CD8-positive, alpha-beta T cell (primary cell): ENCODE measurements at regions of chr17 and their contacts with region 1.

Region 1: DNA sequence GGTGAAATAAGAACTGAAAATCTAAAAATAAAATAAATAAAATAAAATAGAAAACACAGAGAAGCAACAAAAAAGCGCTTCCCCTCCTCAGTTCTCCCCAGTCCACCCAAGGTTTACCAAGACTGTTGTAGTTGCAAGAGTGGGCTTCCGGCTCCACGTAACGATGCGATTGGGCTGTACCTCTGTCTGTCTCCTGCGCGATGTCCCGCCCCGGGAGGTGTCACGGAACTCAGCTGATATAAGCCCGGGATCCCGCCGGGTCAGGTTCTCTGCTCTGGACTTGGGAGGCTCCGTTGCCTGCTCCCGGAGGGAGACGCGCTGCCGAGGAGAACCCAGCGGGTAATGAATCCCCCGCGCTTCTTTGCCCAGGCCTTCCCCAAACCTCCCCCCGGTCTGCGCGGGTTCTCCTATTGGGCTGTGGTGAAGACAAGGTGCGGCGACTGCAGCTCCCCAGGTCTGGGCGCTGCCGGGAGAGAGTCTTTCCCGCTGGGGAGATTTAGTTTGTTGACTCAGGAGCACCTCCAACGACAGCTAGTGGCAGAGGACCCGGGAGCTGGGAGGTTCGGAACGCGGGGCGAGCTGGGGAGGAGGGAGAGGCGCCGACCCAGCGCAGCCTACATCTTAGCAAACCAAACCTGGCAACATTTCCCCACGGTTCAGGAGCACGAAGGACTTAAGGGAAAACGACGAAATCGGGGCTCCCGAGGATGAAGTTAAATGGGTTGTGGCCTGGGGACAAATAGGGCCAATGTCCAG is at the start of gene SLFN5:
- DNase-seq: peak; percentile 87 to 98 (median 94)
- ATAC-seq: peak; percentile 71
- H3K4me3 ChIP-seq: peak within 1 kb of the TSS; percentile 92
- H3K4me3 Mint-ChIP-seq: peak within 1 kb of the TSS; percentile 94
- H3K27ac ChIP-seq: peak within 1 kb of the TSS; percentile 94 to 96
- H3K27ac Mint-ChIP-seq: peak within 1 kb of the TSS; percentile 100
- H3K4me1 ChIP-seq: peaks cover 46% of the 10 kb centered on the region
- H3K4me1 Mint-ChIP-seq: peaks cover 63% of the 10 kb centered on the region
- H3K27me3 ChIP-seq: no peaks in the 10 kb centered on the region
- H3K27me3 Mint-ChIP-seq: no peaks in the 10 kb centered on the region
- CTCF ChIP-seq: no peak
- total RNA-seq, gene SLFN5: 46.7 to 47.0 TPM

Region 2: DNA sequence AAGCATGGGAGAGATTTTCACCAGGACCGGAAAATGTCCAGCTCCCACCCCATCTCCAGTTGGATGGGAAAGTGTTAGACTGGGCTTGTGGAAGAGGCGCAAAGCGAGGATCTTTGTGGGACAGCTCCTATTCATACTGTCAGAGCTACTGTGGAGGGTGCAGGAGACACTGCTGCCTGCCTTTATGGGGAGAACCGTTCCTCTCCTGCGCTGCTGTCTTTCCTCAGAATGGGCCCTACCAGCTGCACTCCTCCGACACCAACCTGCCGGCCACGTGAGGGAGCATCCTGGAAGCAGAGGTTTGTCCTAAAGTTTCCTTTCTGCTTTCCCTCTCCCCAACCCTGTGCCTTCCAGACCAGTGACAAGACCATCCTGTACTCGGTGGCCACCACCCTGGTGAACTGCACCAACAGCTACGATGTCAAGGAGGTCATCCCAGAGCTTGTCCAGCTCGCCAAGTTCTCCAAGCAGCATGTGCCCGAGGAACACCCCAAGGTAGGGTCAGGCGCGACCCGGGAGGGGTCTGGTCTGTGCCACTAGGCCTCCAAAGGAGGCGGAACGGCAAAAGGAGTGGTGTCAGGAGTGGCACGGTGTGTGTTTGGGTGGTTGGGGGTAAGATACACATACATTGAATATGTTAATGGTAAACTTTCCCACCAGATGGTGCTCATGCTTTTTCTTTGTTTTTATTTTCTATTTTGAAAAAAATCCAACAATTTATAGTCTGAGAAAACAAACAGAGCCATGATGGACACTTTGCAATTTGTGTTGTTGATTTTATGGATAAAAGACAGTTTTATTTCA is 71.8 kb before region 1 on chr17:
- CTCF ChIA-PET with region 1: interaction called, 45 read pairs
- POLR2A ChIA-PET with region 1: interaction called, 10 read pairs
- intact Hi-C with region 1: loop called (anchors 1 kb)
- DNase-seq: peak in 5 of 9 experiments; percentile 31 to 70 (median 62)
- ATAC-seq: peak; percentile 79
- H3K4me3 ChIP-seq: peak overlapping the region; percentile 10 to 31
- H3K4me3 Mint-ChIP-seq: peak overlapping the region; percentile 57
- H3K27ac ChIP-seq: peak overlapping the region in 1 of 2 experiments; percentile 51
- H3K27ac Mint-ChIP-seq: peak overlapping the region; percentile 90
- H3K4me1 ChIP-seq: peaks cover 37% of the 10 kb centered on the region
- H3K4me1 Mint-ChIP-seq: peaks cover 46% of the 10 kb centered on the region
- H3K27me3 ChIP-seq: no peaks in the 10 kb centered on the region
- H3K27me3 Mint-ChIP-seq: no peaks in the 10 kb centered on the region
- CTCF ChIP-seq: peak; percentile 69

Region 3: GRCh38 chr17:35214631-35215273 is 28.2 kb before region 1 on chr17:
- CTCF ChIA-PET with region 1: interaction called, 31 read pairs
- POLR2A ChIA-PET with region 1: interaction called, 145 read pairs
- intact Hi-C with region 1: loop called (anchors 1 kb)
- DNase-seq: peak in 8 of 9 experiments; percentile 16 to 74 (median 48)
- ATAC-seq: peak; percentile 50
- H3K4me3 ChIP-seq: peak overlapping the region; percentile 33 to 42
- H3K4me3 Mint-ChIP-seq: peak overlapping the region; percentile 67
- H3K27ac ChIP-seq: peak overlapping the region; percentile 77 to 84
- H3K27ac Mint-ChIP-seq: peak overlapping the region; percentile 98
- H3K4me1 ChIP-seq: peaks cover 90% of the 10 kb centered on the region
- H3K4me1 Mint-ChIP-seq: peaks cover 89% of the 10 kb centered on the region
- H3K27me3 ChIP-seq: no peaks in the 10 kb centered on the region
- H3K27me3 Mint-ChIP-seq: no peaks in the 10 kb centered on the region
- CTCF ChIP-seq: no peak

Region 4: DNA sequence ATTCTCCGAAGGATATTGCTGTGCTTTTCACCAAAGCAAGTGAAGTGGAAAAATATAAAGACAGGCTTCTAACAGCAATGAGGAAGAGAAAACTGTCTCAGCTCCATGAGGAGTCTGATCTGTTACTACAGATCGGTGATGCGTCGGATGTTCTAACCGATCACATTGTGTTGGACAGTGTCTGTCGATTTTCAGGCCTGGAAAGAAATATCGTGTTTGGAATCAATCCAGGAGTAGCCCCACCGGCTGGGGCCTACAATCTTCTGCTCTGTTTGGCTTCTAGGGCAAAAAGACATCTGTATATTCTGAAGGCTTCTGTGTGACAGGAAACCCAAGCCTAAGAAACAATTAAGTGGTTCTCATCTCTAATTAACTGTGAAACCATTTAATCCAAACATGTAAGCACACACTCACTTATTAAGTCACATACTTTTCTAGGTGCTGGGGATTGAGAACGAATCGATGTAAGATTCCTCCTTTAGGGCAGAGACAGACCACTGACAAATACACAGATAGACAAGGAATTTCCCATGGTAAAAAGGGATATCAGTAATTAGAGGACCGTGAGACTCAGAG is 22.7 kb after region 1 on chr17:
- CTCF ChIA-PET with region 1: interaction called, 7 read pairs
- POLR2A ChIA-PET with region 1: interaction called, 12 read pairs
- intact Hi-C with region 1: no loop called
- DNase-seq: no peak
- ATAC-seq: no peak
- H3K4me3 ChIP-seq: no peak overlapping the region
- H3K4me3 Mint-ChIP-seq: peak overlapping the region; percentile 13
- H3K27ac ChIP-seq: peak overlapping the region in 1 of 2 experiments; percentile 22
- H3K27ac Mint-ChIP-seq: peak overlapping the region; percentile 91
- H3K4me1 ChIP-seq: peaks cover 74% of the 10 kb centered on the region
- H3K4me1 Mint-ChIP-seq: peaks cover 74% of the 10 kb centered on the region
- H3K27me3 ChIP-seq: no peaks in the 10 kb centered on the region
- H3K27me3 Mint-ChIP-seq: no peaks in the 10 kb centered on the region
- CTCF ChIP-seq: no peak

Region 5: DNA sequence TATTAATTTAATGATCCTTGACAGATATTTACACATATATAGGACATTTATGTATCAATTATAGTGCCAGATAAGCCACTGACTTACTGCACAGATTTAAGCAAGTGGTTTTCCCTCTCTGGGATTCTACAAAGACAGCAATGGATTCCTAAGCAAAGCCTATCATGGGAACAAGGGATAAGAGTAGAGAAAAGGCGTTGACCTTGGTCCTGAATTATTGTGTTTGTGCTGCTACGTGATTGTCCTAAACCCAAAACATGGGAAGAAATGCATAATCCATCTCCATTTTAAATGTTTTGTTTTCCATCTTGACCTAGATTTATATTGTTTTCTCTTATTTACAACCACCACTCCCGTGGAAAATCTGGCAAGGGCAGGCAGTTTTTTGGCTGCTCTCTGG is 116.4 kb after region 1 on chr17:
- CTCF ChIA-PET with region 1: no interaction called
- POLR2A ChIA-PET with region 1: no interaction called
- intact Hi-C with region 1: no loop called
- DNase-seq: no peak
- ATAC-seq: no peak
- H3K4me3 ChIP-seq: no peak overlapping the region
- H3K4me3 Mint-ChIP-seq: no peak overlapping the region
- H3K27ac ChIP-seq: no peak overlapping the region
- H3K27ac Mint-ChIP-seq: no peak overlapping the region
- H3K4me1 ChIP-seq: no peaks in the 10 kb centered on the region
- H3K4me1 Mint-ChIP-seq: peaks cover 16% of the 10 kb centered on the region
- H3K27me3 ChIP-seq: no peaks in the 10 kb centered on the region
- H3K27me3 Mint-ChIP-seq: no peaks in the 10 kb centered on the region
- CTCF ChIP-seq: no peak

Region 6: GRCh38 chr17:35486920-35487732 is 244.1 kb after region 1 on chr17:
- CTCF ChIA-PET with region 1: no interaction called
- POLR2A ChIA-PET with region 1: interaction called, 10 read pairs
- intact Hi-C with region 1: no loop called
- DNase-seq: peak; percentile 31 to 90 (median 75)
- ATAC-seq: peak; percentile 67
- H3K4me3 ChIP-seq: peak overlapping the region; percentile 77 to 86
- H3K4me3 Mint-ChIP-seq: peak overlapping the region; percentile 90
- H3K27ac ChIP-seq: peak overlapping the region; percentile 83 to 88
- H3K27ac Mint-ChIP-seq: peak overlapping the region; percentile 98
- H3K4me1 ChIP-seq: peaks cover 28% of the 10 kb centered on the region
- H3K4me1 Mint-ChIP-seq: peaks cover 58% of the 10 kb centered on the region
- H3K27me3 ChIP-seq: no peaks in the 10 kb centered on the region
- H3K27me3 Mint-ChIP-seq: no peaks in the 10 kb centered on the region
- CTCF ChIP-seq: no peak

Region 7: DNA sequence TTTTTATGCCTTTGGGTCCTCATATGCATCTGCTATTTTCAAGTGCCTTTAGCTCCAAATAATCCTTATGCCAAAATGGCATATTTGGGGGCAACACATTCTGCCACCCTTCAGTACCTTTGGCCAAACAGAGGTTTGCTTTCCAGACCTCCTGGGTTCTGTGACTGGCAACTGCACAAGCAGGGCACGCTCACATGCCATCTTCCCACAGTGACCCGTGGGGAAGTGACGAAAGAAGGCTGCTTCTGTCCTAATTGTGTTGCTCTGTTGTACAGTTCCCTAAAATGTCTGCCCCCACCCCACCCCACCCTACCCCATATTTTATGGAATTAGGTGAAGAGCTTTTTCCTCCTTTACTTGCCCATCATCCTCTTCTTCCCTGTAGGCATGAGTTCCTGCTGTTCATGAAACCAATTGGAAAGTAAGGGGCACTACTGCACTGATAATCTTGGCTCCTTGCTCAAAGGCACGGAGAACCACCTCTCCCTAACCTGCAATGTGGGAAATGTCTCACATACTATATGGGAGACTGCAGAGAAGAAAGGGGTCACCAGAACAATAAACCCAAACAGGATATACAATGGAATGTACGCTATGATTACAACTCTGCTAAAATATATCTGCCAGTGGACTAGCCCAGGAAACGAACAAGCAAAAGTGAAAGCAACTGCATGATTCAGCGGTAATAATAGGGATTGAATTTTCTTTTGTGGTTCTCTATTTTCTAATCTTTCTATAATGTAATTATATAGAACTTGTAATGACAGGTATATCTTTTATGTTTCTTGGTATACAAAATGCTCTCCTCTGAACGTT is 297.8 kb after region 1 on chr17:
- CTCF ChIA-PET with region 1: interaction called, 54 read pairs
- POLR2A ChIA-PET with region 1: interaction called, 64 read pairs
- intact Hi-C with region 1: loop called (anchors 1 to 2 kb)
- DNase-seq: peak in 7 of 9 experiments; percentile 17 to 76 (median 47)
- ATAC-seq: peak; percentile 34
- H3K4me3 ChIP-seq: peak overlapping the region; percentile 56 to 59
- H3K4me3 Mint-ChIP-seq: peak overlapping the region; percentile 88
- H3K27ac ChIP-seq: peak overlapping the region; percentile 63 to 89
- H3K27ac Mint-ChIP-seq: peak overlapping the region; percentile 93
- H3K4me1 ChIP-seq: peaks cover 31% of the 10 kb centered on the region
- H3K4me1 Mint-ChIP-seq: peaks cover 49% of the 10 kb centered on the region
- H3K27me3 ChIP-seq: no peaks in the 10 kb centered on the region
- H3K27me3 Mint-ChIP-seq: no peaks in the 10 kb centered on the region
- CTCF ChIP-seq: no peak